ENCODE measurements at regions of chr6 and their contacts with region 1.

Region 1: GRCh38 chr6:112780498-112781096 is 433.5 kb downstream of the RFPL4B start:
- DNase-seq: peak; percentile 64
- ATAC-seq: no peak
- H3K4me3 Mint-ChIP-seq: no peak overlapping the region
- H3K27ac Mint-ChIP-seq: no peak overlapping the region
- H3K4me1 Mint-ChIP-seq: no peaks in the 10 kb centered on the region
- H3K27me3 Mint-ChIP-seq: peaks cover 2% of the 10 kb centered on the region

Region 2: DNA sequence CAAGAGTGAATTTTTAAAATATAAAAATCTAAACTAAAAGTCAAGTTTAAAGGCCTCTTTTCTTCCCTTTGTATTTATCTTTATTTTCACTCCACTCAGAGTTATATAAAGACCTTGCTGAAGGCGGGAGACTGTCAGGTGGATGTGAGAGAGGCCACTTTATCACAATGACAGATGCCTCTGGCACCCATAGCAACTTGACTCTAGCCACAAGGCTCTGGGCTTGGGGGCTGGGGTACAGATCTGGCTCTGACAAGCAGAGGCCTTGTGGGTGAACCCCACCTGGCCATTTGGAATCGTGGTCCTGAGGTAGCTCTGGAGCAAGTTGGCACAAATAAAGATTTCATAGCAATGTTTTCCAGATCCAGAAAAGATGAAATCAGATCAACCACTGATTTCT is 16.2 kb before region 1 on chr6:
- CTCF ChIA-PET with region 1: no interaction called
- POLR2A ChIA-PET with region 1: no interaction called
- intact Hi-C with region 1: no loop called
- DNase-seq: no peak
- ATAC-seq: no peak
- H3K4me3 Mint-ChIP-seq: no peak overlapping the region
- H3K27ac Mint-ChIP-seq: no peak overlapping the region
- H3K4me1 Mint-ChIP-seq: no peaks in the 10 kb centered on the region
- H3K27me3 Mint-ChIP-seq: no peaks in the 10 kb centered on the region

Region 3: DNA sequence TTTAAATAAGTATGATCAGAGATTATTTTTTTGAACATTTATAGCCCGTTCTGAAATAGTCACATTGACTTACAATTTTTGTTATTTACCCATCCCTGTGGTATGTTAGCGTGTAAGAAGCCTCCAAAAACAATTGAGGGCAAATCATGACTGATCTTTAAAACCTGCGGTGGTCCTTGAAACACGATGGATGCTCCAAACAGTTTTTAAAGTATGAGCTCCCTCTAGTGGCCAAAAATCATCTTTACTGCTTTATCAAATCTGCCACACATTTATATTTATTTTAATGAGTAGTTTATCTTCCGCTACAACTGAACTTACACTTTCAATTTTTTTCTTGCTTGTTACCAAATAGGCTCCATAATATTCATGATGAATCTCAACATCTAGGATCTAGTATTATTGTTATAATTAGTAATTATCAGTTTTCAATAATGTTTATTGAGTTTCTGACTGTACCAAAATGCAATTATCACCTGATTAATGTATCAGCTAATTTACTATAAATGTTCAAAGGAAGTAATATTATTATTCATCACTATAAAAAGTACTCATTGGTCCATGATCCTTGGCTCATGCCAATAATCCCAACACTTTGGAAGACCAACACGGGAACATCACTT is 1128.7 kb after region 1 on chr6:
- CTCF ChIA-PET with region 1: no interaction called
- POLR2A ChIA-PET with region 1: no interaction called
- intact Hi-C with region 1: loop called (anchors 1 to 5 kb)
- DNase-seq: no peak
- ATAC-seq: no peak
- H3K4me3 Mint-ChIP-seq: no peak overlapping the region
- H3K27ac Mint-ChIP-seq: no peak overlapping the region
- H3K4me1 Mint-ChIP-seq: no peaks in the 10 kb centered on the region
- H3K27me3 Mint-ChIP-seq: peaks cover 5% of the 10 kb centered on the region

Region 4: DNA sequence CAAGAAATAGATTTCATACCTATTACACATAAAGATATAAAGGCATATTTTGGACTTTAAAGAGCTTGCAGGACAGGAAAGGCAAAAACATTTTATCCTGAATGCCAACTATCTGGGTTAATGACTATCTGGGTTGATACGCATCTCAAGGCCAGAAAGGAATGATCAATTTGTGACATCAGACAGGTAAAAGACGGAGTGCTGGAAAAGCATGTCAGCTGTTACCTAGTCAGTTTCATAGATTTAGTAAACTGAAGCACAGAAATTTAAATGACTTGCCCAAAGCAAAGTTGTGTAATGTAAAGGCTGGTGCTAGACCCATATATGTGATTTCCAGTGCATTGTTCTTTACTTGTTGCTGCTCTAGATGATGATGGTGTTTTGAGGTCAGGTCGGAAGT is 1153.5 kb after region 1 on chr6:
- CTCF ChIA-PET with region 1: no interaction called
- POLR2A ChIA-PET with region 1: no interaction called
- intact Hi-C with region 1: loop called in 1 of 2 experiments (anchors 2 kb)
- DNase-seq: no peak
- ATAC-seq: no peak
- H3K4me3 Mint-ChIP-seq: no peak overlapping the region
- H3K27ac Mint-ChIP-seq: no peak overlapping the region
- H3K4me1 Mint-ChIP-seq: no peaks in the 10 kb centered on the region
- H3K27me3 Mint-ChIP-seq: peaks cover 4% of the 10 kb centered on the region

Measured in activated CD4-positive, alpha-beta T cell treated with anti-CD3 and anti-CD28 coated beads for 36 hours (primary cell).